ENCODE measurements at regions of chr12 and their contacts with region 1.

Region 1: GRCh38 chr12:29427964-29428363 is 47.0 kb upstream of the ERGIC2 start:
- DNase-seq: peak; percentile 59 to 77 (median 77)
- H3K4me3 ChIP-seq: peak overlapping the region in 1 of 3 experiments; percentile 34
- H3K4me3 Mint-ChIP-seq: no peak overlapping the region
- H3K27ac ChIP-seq: peak overlapping the region in 1 of 2 donors; percentile 85
- H3K27ac Mint-ChIP-seq: peak overlapping the region; percentile 84 to 96 (median 93)
- H3K4me1 ChIP-seq: peaks cover 33 to 38% of the 10 kb centered on the region in 2 donors
- H3K4me1 Mint-ChIP-seq: peaks cover 37% of the 10 kb centered on the region
- H3K27me3 ChIP-seq: no peaks in the 10 kb centered on the region
- H3K27me3 Mint-ChIP-seq: peaks cover 0 to 4% (median 0%) of the 10 kb centered on the region in 3 donors
- CTCF ChIP-seq: peak; percentile 65

Region 2: GRCh38 chr12:29164477-29165393 is 263.2 kb before region 1 on chr12:
- intact Hi-C with region 1: loop called in 1 of 2 experiments (anchors 10 kb)
- DNase-seq: peak; percentile 79 to 95 (median 91)
- H3K4me3 ChIP-seq: peak overlapping the region in 2 of 3 experiments; percentile 19 to 21
- H3K4me3 Mint-ChIP-seq: peak overlapping the region in 1 of 2 donors; percentile 75
- H3K27ac ChIP-seq: peak overlapping the region; percentile 91 to 98
- H3K27ac Mint-ChIP-seq: peak overlapping the region; percentile 98 to 100 (median 100)
- H3K4me1 ChIP-seq: peaks cover 69 to 83% of the 10 kb centered on the region in 2 donors
- H3K4me1 Mint-ChIP-seq: peaks cover 75% of the 10 kb centered on the region
- H3K27me3 ChIP-seq: no peaks in the 10 kb centered on the region
- H3K27me3 Mint-ChIP-seq: peaks cover 0 to 4% (median 2%) of the 10 kb centered on the region in 3 donors
- CTCF ChIP-seq: no peak

Region 3: DNA sequence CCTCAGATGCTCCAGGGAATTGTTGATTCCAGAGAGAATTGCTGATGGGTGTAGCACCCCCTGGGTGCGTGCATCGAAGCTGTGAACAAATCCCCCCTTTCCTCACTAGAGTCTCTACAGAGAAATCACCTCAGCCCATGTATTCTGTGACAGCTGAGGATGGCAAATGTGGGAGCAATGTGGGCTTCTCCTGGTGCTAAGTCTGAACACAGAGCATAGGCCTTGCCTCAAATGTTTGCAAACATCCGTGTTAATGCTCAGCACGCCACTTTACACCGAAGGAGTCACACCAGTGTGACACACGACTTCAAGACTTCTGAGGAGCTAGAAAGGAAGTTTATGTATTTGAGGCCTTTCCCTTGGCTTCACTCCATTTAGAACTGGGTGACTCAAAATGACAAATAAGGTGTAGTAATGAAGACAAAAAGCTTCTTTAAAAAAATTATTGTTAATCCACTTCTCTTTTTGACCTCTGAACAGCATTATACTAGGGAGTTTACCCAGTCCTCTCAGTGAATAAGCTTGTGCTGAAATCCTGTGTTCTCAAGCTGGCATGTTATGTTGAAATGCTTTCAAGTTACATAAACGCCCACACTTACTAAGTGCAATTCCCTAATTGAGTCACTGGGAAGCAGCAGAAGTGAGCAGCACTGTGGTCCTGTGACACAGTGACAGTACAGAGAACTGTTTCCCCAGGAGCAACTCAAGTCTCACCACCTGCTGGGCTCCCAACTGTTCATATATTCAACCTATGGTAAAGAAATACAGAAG is 186.0 kb before region 1 on chr12:
- intact Hi-C with region 1: loop called (anchors 10 kb)
- DNase-seq: peak; percentile 93 to 99 (median 95)
- H3K4me3 ChIP-seq: peak overlapping the region in 1 of 3 experiments; percentile 19
- H3K4me3 Mint-ChIP-seq: peak overlapping the region; percentile 15 to 34
- H3K27ac ChIP-seq: peak overlapping the region; percentile 95 to 100
- H3K27ac Mint-ChIP-seq: peak overlapping the region; percentile 97 to 100 (median 99)
- H3K4me1 ChIP-seq: peaks cover 30 to 38% of the 10 kb centered on the region in 2 donors
- H3K4me1 Mint-ChIP-seq: peaks cover 39% of the 10 kb centered on the region
- H3K27me3 ChIP-seq: no peaks in the 10 kb centered on the region
- H3K27me3 Mint-ChIP-seq: peaks cover 0 to 1% (median 0%) of the 10 kb centered on the region in 3 donors
- CTCF ChIP-seq: peak; percentile 25

Region 4: DNA sequence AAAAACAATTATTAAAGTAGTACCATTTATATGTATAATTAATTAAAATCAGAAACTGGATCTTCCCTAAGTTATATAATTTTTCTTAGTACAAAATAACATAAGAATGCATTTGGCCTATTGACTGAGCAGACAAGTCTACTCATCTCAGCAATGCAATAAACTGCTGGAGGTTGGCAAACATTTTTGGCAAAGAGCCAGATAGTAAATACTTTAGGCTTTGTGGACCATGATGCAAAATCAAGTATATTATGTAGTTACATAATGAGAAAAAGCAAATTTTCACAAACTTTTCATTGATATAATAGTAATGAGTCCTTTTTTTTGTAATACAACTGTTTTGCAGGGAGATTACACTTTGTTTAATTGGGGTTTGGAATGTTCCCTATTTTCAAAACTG is 77.9 kb before region 1 on chr12:
- intact Hi-C with region 1: no loop called
- DNase-seq: no peak
- H3K4me3 ChIP-seq: no peak overlapping the region
- H3K4me3 Mint-ChIP-seq: no peak overlapping the region
- H3K27ac ChIP-seq: no peak overlapping the region
- H3K27ac Mint-ChIP-seq: no peak overlapping the region
- H3K4me1 ChIP-seq: no peaks in the 10 kb centered on the region
- H3K4me1 Mint-ChIP-seq: no peaks in the 10 kb centered on the region
- H3K27me3 ChIP-seq: no peaks in the 10 kb centered on the region
- H3K27me3 Mint-ChIP-seq: peaks cover 0 to 1% (median 0%) of the 10 kb centered on the region in 3 donors
- CTCF ChIP-seq: no peak

Region 5: GRCh38 chr12:29380536-29381523 is 47.1 kb before region 1 on chr12 and contains the start of gene ERGIC2:
- intact Hi-C with region 1: loop called (anchors 2 to 5 kb)
- DNase-seq: peak; percentile 95 to 98 (median 96)
- H3K4me3 ChIP-seq: peak within 1 kb of the TSS; percentile 94 to 98 (median 95)
- H3K4me3 Mint-ChIP-seq: peak within 1 kb of the TSS; percentile 93 to 96
- H3K27ac ChIP-seq: peak within 1 kb of the TSS; percentile 87 to 96
- H3K27ac Mint-ChIP-seq: peak within 1 kb of the TSS; percentile 89 to 95 (median 94)
- H3K4me1 ChIP-seq: peaks cover 12 to 16% of the 10 kb centered on the region in 2 donors
- H3K4me1 Mint-ChIP-seq: peaks cover 15% of the 10 kb centered on the region
- H3K27me3 ChIP-seq: no peaks in the 10 kb centered on the region
- H3K27me3 Mint-ChIP-seq: peaks cover 0 to 11% (median 0%) of the 10 kb centered on the region in 3 donors
- CTCF ChIP-seq: no peak
- polyA plus RNA-seq, gene ERGIC2: 5.9 to 59.0 (median 52.7) TPM

Region 6: GRCh38 chr12:29396762-29397161 is 31.2 kb before region 1 on chr12:
- intact Hi-C with region 1: no loop called
- DNase-seq: no peak
- H3K4me3 ChIP-seq: no peak overlapping the region
- H3K4me3 Mint-ChIP-seq: no peak overlapping the region
- H3K27ac ChIP-seq: no peak overlapping the region
- H3K27ac Mint-ChIP-seq: no peak overlapping the region
- H3K4me1 ChIP-seq: no peaks in the 10 kb centered on the region
- H3K4me1 Mint-ChIP-seq: no peaks in the 10 kb centered on the region
- H3K27me3 ChIP-seq: peaks cover 0 to 5% of the 10 kb centered on the region in 2 donors
- H3K27me3 Mint-ChIP-seq: peaks cover 1 to 8% (median 5%) of the 10 kb centered on the region in 3 donors
- CTCF ChIP-seq: no peak

Region 7: DNA sequence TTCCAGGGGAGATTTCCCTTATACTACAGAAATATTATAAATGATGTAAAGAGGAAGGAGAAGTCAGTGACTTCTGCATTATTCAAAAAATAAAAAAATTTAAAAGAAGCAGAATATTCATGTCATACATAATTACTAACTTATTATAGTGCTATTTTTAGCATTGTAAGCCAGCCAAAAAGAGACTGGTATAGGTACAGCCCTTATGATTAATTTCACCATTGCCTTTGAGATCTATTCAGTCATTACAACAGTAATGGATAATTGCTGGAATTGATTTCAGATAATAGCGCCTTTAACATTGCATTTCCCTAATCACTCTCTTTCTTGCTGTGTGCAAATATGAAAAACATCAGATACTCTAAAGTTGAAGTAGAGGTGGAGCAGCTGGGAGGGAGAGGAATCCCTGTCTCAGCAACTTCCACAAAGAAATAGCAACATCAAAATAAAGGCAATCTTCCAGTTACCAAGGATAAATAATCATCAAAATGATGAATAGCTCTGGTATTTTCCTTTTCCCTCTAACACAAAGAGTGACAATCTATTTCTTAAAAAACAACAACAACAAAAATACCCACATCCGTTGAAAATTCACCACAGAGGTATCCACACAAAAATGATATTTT is 141.3 kb after region 1 on chr12:
- intact Hi-C with region 1: no loop called
- DNase-seq: no peak
- H3K4me3 ChIP-seq: no peak overlapping the region
- H3K4me3 Mint-ChIP-seq: no peak overlapping the region
- H3K27ac ChIP-seq: no peak overlapping the region
- H3K27ac Mint-ChIP-seq: no peak overlapping the region
- H3K4me1 ChIP-seq: peaks cover 0 to 1% of the 10 kb centered on the region in 2 donors
- H3K4me1 Mint-ChIP-seq: peaks cover 7% of the 10 kb centered on the region
- H3K27me3 ChIP-seq: no peaks in the 10 kb centered on the region
- H3K27me3 Mint-ChIP-seq: peaks cover 3 to 6% (median 4%) of the 10 kb centered on the region in 3 donors
- CTCF ChIP-seq: no peak